ENCODE measurements at regions of chr7 and their contacts with region 1.

Region 1: GRCh38 chr7:992709-993607 is 10.0 kb downstream of the CYP2W1 start:
- DNase-seq: peak; percentile 96
- H3K4me3 Mint-ChIP-seq: no peak overlapping the region
- H3K27ac Mint-ChIP-seq: no peak overlapping the region
- H3K4me1 Mint-ChIP-seq: no peaks in the 10 kb centered on the region
- H3K27me3 Mint-ChIP-seq: no peaks in the 10 kb centered on the region

Region 2: GRCh38 chr7:909358-910329 is 83.3 kb before region 1 on chr7:
- CTCF ChIA-PET with region 1: interaction called, 27 read pairs
- POLR2A ChIA-PET with region 1: no interaction called
- intact Hi-C with region 1: no loop called
- DNase-seq: no peak
- H3K4me3 Mint-ChIP-seq: peak overlapping the region; percentile 8
- H3K27ac Mint-ChIP-seq: no peak overlapping the region
- H3K4me1 Mint-ChIP-seq: peaks cover 10% of the 10 kb centered on the region
- H3K27me3 Mint-ChIP-seq: no peaks in the 10 kb centered on the region

Region 3: GRCh38 chr7:1004018-1004852 is 11.3 kb after region 1 on chr7:
- CTCF ChIA-PET with region 1: interaction called, 13 read pairs
- POLR2A ChIA-PET with region 1: no interaction called
- intact Hi-C with region 1: no loop called
- DNase-seq: no peak
- H3K4me3 Mint-ChIP-seq: no peak overlapping the region
- H3K27ac Mint-ChIP-seq: no peak overlapping the region
- H3K4me1 Mint-ChIP-seq: no peaks in the 10 kb centered on the region
- H3K27me3 Mint-ChIP-seq: no peaks in the 10 kb centered on the region

Region 4: DNA sequence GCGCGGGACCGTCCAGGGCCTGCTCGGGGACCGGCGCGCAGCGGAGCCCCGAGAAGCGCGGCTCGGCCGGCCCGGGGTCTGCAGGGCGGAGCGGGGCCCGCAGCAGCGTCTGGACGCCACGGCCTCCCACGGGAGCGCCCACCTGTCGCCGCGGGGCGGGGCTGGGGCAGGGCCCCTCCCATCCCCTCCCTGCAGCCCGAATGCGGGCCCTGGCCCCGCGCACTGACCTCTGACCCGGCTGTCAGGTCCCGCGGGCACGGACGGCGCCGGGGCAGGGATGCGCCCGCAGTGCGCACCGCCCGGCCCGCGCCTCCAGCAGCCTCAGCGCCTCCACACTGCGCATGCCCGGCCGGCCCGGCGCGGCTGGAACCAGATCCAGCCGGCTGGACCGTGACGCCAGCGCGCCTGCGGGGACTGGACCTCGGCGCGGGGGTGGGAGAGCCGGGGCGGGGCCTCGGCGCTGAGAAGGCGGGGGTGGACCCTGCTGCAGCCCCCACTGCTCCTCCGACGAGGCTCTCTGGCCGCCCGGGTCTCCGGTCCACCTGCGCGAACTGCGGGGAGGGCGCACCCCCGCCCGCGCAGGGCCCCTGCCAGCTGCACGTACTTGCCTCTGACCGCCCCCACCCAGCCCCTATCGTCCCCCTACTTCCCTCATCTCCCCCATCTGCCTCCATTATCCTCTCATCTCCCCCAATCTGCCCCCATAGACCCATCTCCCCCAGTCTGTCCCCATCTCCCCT is 35.2 kb after region 1 on chr7:
- CTCF ChIA-PET with region 1: interaction called, 13 read pairs
- POLR2A ChIA-PET with region 1: no interaction called
- intact Hi-C with region 1: loop called (anchors 5 kb)
- DNase-seq: peak; percentile 92
- H3K4me3 Mint-ChIP-seq: peak overlapping the region; percentile 66
- H3K27ac Mint-ChIP-seq: peak overlapping the region; percentile 83
- H3K4me1 Mint-ChIP-seq: peaks cover 37% of the 10 kb centered on the region
- H3K27me3 Mint-ChIP-seq: no peaks in the 10 kb centered on the region

Region 5: GRCh38 chr7:1065263-1066260 is 72.6 kb after region 1 on chr7:
- CTCF ChIA-PET with region 1: interaction called, 300 read pairs
- POLR2A ChIA-PET with region 1: interaction called, 8 read pairs
- intact Hi-C with region 1: loop called (anchors 1 kb)
- DNase-seq: peak; percentile 89
- H3K4me3 Mint-ChIP-seq: no peak overlapping the region
- H3K27ac Mint-ChIP-seq: no peak overlapping the region
- H3K4me1 Mint-ChIP-seq: peaks cover 5% of the 10 kb centered on the region
- H3K27me3 Mint-ChIP-seq: no peaks in the 10 kb centered on the region

Region 6: DNA sequence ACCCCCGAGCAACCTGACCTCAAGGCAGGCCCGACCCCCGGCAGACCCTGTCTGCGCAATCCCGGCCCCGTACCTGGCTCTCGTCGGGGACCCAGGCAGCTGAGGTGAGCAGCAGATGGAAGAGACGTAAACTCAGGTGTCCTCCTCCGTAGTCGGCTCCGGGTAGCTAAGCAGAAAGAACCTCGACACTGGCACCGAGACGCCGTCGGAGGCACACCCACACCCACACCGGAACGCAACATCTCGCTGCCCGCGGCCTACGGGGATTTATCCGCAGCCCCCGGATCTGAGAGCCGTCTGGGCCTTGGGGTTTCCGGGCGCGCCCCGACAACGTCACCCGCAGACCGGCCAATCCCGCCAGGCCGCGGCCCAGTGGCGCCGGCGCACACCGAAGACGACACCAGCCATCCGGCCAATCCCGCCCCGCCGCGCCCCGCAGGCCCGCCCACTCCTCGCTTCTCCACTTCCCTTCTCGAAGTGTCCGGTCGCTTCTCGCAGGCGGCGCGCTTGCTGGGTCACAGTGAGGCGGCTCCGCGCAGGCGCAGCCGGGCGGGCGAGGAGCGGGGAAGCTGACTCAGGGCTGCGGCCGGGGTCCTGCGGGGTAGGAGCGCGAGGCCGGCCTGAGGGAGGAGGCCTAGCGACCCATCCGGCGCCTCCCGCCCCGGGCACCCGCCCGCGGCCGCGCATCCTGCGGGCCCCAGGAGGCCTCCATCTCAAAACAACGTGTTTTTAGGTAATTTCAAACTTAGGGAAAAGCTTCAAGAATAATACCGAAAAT is 167.1 kb after region 1 on chr7 and contains the start of gene ZFAND2A:
- CTCF ChIA-PET with region 1: interaction called, 11 read pairs
- POLR2A ChIA-PET with region 1: no interaction called
- intact Hi-C with region 1: no loop called
- DNase-seq: peak; percentile 99
- H3K4me3 Mint-ChIP-seq: peak within 1 kb of the TSS; percentile 90
- H3K27ac Mint-ChIP-seq: peak within 1 kb of the TSS; percentile 87
- H3K4me1 Mint-ChIP-seq: peaks cover 25% of the 10 kb centered on the region
- H3K27me3 Mint-ChIP-seq: no peaks in the 10 kb centered on the region
- total RNA-seq, gene ZFAND2A: 24.1 to 27.5 TPM

Region 7: DNA sequence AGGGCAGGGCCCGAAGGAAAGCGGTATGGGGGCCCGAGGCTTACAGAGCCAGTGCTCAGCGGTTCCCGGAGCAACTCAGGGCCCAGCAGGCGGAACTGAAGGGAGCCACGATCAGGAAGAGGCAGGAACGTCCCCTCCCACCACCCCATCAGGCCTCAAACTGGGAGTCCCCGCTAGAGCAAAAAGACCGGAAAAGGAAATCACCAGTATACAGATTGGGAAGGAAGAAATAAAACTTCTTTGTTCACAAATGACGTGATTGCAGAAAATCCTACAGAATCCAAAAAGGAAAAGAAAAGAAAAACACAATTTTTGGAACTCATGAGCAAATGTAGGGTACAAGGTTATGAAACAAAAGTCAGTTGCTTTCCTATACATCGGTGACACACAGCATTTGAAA is 188.7 kb after region 1 on chr7:
- CTCF ChIA-PET with region 1: interaction called, 31 read pairs
- POLR2A ChIA-PET with region 1: no interaction called
- intact Hi-C with region 1: loop called (anchors 2 kb)
- DNase-seq: no peak
- H3K4me3 Mint-ChIP-seq: no peak overlapping the region
- H3K27ac Mint-ChIP-seq: no peak overlapping the region
- H3K4me1 Mint-ChIP-seq: peaks cover 4% of the 10 kb centered on the region
- H3K27me3 Mint-ChIP-seq: peaks cover 20% of the 10 kb centered on the region

Region 8: DNA sequence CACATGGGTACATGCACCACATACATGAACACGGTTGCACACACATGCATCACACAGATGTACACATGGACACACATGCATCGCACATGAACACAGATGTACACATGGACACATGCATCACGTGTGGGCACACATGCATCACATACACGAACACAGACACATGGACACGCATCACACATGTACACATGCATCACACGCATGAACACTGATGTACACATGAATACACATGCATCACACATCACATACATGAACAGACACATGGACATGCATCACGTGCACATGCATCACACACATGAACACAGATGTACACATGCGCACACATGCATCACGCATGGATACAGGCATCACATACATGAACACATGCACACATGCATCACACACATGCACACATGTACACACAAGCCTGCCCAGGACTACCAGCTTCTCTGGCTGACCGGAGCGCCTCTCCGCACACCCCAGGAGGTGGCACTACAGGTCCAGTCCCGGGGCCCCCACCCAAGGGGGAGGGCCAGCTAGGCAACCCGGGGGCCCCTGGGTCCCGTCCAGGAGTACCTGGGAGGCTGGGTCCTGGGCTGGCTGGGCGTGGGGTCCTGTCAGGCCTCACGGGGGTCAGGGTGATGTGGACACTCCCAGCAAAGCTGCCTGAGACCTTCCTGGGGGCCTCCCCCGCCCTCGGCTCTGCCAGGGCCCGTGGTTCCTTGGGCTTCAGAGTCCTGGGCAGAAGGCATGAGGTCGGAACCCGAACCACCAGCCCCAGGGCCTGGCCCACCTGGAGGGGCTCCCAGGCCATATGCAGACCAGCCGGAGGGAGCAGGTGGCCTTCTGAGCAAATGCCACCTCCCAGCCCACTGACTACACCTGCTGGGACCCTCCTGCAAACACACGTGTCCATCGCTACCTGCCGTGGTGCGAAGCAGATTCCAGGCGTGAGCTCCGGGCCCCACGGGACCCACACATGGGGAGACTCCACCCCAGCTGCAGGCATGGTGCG is 446.7 kb after region 1 on chr7:
- CTCF ChIA-PET with region 1: no interaction called
- POLR2A ChIA-PET with region 1: no interaction called
- intact Hi-C with region 1: no loop called
- DNase-seq: no peak
- H3K4me3 Mint-ChIP-seq: no peak overlapping the region
- H3K27ac Mint-ChIP-seq: no peak overlapping the region
- H3K4me1 Mint-ChIP-seq: no peaks in the 10 kb centered on the region
- H3K27me3 Mint-ChIP-seq: no peaks in the 10 kb centered on the region

Measured in activated CD4-positive, alpha-beta memory T cell treated with anti-CD3 and anti-CD28 coated beads for 36 hours (primary cell).